Gastrocnemius medialis (tissue), 4 donors: ENCODE measurements at regions of chr4 and their contacts with region 1.

Region 1: GRCh38 chr4:75745161-75745560 is 20.8 kb downstream of the USO1 start:
- DNase-seq: peak; percentile 44 to 52
- ATAC-seq: peak; percentile 98
- H3K4me3 ChIP-seq: no peak overlapping the region
- H3K27ac ChIP-seq: peak overlapping the region; percentile 84 to 92 (median 86)
- H3K4me1 ChIP-seq: peaks cover 37 to 53% of the 10 kb centered on the region in 2 donors
- H3K27me3 ChIP-seq: no peaks in the 10 kb centered on the region
- CTCF ChIP-seq: no peak
- POLR2A ChIP-seq: peak; percentile 25 to 44

Region 2: GRCh38 chr4:75584067-75584466 is 161.1 kb before region 1 on chr4:
- in situ Hi-C with region 1: no loop called
- intact Hi-C with region 1: no loop called
- DNase-seq: no peak
- ATAC-seq: no peak
- H3K4me3 ChIP-seq: no peak overlapping the region
- H3K27ac ChIP-seq: no peak overlapping the region
- H3K4me1 ChIP-seq: no peaks in the 10 kb centered on the region
- H3K27me3 ChIP-seq: no peaks in the 10 kb centered on the region
- CTCF ChIP-seq: no peak
- POLR2A ChIP-seq: no peak

Region 3: GRCh38 chr4:76305971-76306881 is 561.1 kb after region 1 on chr4 and contains the start of gene STBD1:
- in situ Hi-C with region 1: no loop called
- intact Hi-C with region 1: loop called (anchors 10 kb)
- DNase-seq: peak; percentile 86 to 90
- ATAC-seq: peak; percentile 60 to 70
- H3K4me3 ChIP-seq: peak within 1 kb of the TSS; percentile 79 to 87 (median 86)
- H3K27ac ChIP-seq: peak within 1 kb of the TSS; percentile 93 to 98 (median 96)
- H3K4me1 ChIP-seq: peaks cover 68 to 69% of the 10 kb centered on the region in 2 donors
- H3K27me3 ChIP-seq: no peaks in the 10 kb centered on the region
- CTCF ChIP-seq: peak in 1 of 5 experiments; percentile 7
- POLR2A ChIP-seq: peak; percentile 81 to 88
- total RNA-seq, gene STBD1: 17.9 to 57.5 (median 41.5) TPM